ENCODE measurements at regions of chr12 and their contacts with region 1.

Region 1: DNA sequence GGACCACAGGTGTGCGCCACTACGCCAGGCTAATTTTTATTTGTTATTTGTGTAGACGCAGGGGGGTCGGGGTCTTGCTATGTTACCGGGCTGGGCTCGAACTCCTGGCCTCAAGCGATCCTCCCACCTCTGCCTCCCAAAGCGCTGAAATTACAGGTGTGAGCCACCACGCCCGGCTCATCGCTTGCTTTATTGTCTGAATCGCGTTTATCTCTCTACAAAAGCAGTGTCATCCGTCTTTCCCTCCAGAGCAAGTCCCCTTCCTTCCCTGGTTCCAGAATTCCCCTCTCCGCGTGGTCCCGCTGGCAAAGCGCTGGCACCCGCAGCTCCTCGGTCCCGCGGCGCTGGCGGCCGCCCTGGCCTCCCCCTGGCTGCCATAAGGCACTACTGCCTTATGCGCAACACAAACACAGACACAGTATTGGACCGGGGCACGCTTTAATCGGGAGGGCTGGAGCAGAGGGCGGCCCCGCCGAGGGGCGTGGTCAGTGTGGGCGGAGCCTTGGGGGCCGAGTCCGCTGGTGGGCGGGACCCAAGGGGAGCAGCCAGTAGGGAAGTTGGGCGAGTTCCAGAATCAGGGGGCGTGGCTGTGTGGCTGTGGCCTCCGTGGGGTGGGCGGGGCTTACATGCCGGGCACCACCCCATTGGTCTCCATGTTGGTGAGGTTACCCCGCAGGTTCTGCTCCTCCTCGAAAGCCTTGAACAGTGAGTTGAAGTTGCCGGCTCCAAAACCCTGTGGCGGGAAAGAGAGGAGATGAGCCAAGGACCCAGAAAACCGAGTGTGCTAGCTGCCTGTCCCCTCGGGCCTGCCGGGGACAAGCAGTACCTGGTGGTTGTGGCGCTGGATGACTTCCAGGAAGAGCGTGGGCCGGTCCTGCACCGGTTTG is 19.3 kb downstream of the HPD start:
- DNase-seq: peak; percentile 99
- H3K4me3 ChIP-seq: peak overlapping the region; percentile 57 to 69 (median 60)
- H3K27ac ChIP-seq: peak overlapping the region; percentile 57 to 78 (median 64)
- H3K4me1 ChIP-seq: peaks cover 6 to 15% (median 14%) of the 10 kb centered on the region in 4 donors
- H3K27me3 ChIP-seq: peaks cover 0 to 3% (median 0%) of the 10 kb centered on the region in 4 donors
- CTCF ChIP-seq: peak; percentile 40 to 63 (median 59)
- EP300 ChIP-seq: no peak
- POLR2A ChIP-seq: no peak

Region 2: GRCh38 chr12:121888478-121889266 is 49.3 kb after region 1 on chr12 and contains the start of gene PSMD9:
- intact Hi-C with region 1: loop called (anchors 2 kb)
- DNase-seq: peak; percentile 99
- H3K4me3 ChIP-seq: peak within 1 kb of the TSS; percentile 65 to 98 (median 70)
- H3K27ac ChIP-seq: peak within 1 kb of the TSS; percentile 88 to 99 (median 92)
- H3K4me1 ChIP-seq: peaks cover 19 to 39% (median 30%) of the 10 kb centered on the region in 4 donors
- H3K27me3 ChIP-seq: peaks cover 0 to 8% (median 0%) of the 10 kb centered on the region in 4 donors
- CTCF ChIP-seq: peak; percentile 54 to 72 (median 65)
- EP300 ChIP-seq: no peak
- POLR2A ChIP-seq: peak; percentile 67
- total RNA-seq, gene PSMD9: 22.4 to 63.7 (median 44.4) TPM

Region 3: DNA sequence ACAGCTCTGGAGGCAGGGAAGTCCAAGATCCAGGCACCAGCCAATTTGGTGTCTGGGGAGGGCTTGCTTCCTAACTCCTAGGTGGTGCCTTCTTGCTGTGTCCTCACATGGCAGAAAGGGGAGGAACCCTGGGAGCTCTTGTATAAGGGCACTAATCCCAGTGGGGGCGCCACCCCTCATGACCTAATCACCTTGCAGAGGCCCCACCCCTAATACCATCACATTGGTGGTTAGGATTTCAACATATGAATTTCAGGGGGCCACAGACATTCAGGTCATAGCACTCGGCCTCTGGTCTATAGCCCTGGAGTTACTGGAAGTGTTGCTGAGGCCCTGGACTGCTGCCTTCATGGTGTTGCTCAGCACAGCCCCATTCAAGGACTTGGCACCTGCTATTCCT is 63.9 kb after region 1 on chr12:
- intact Hi-C with region 1: no loop called
- DNase-seq: no peak
- H3K4me3 ChIP-seq: no peak overlapping the region
- H3K27ac ChIP-seq: no peak overlapping the region
- H3K4me1 ChIP-seq: no peaks in the 10 kb centered on the region
- H3K27me3 ChIP-seq: no peaks in the 10 kb centered on the region
- CTCF ChIP-seq: no peak
- EP300 ChIP-seq: no peak
- POLR2A ChIP-seq: no peak

Region 4: DNA sequence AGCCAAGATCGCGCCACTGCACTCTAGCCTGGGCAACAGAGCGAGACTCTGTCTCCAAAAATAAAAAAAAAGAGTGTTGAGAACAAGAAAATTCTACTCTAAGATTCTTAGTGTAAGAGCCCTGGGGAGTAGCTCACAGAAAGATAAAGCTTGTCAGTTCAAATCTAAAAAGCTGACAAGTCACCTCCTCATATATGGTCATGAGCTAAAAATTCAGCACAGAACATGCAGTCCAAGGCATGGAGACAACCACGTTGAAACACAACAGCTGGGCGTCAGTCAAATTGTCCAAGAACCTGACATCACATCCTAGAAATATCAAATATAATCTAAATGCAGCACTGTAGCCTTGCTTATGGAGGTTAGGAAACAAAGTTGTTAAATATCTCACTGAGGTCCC is 535.4 kb after region 1 on chr12:
- intact Hi-C with region 1: no loop called
- DNase-seq: no peak
- H3K4me3 ChIP-seq: no peak overlapping the region
- H3K27ac ChIP-seq: peak overlapping the region; percentile 82 to 90 (median 86)
- H3K4me1 ChIP-seq: peaks cover 20 to 78% (median 63%) of the 10 kb centered on the region in 4 donors
- H3K27me3 ChIP-seq: no peaks in the 10 kb centered on the region
- CTCF ChIP-seq: no peak
- EP300 ChIP-seq: peak; percentile 95
- POLR2A ChIP-seq: no peak

Region 5: DNA sequence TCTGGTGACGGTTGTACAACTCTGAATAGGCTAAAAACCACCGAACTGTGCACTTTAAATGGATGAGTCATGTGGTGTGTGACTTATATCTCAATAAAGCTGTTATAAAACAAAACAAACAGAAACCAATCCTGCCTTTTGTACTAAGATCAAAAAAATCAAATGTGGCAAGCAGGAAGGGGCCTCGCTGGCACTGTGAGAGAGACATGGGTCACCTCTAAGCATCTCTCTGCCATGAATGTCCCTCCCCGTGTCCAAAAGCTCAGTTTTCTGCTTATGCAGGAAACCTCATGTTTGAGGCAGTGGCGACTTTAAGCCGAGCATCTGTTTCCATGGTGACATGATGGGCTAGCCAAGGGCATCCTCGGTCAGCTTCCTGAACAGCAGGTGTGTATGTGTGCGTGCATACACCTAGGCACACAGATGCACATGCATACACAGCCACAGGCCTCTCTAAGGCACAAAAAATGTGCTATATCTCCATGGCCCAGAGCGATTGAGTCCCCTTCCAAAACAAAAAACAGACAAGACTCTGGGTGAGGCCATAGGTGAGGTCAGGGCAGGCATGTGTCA is 1185.6 kb after region 1 on chr12:
- intact Hi-C with region 1: no loop called
- DNase-seq: no peak
- H3K4me3 ChIP-seq: no peak overlapping the region
- H3K27ac ChIP-seq: no peak overlapping the region
- H3K4me1 ChIP-seq: no peaks in the 10 kb centered on the region
- H3K27me3 ChIP-seq: no peaks in the 10 kb centered on the region
- CTCF ChIP-seq: no peak
- EP300 ChIP-seq: no peak
- POLR2A ChIP-seq: no peak

Measured in esophagus muscularis mucosa (tissue), 4 donors.